CD4-positive, alpha-beta T cell (primary cell): ENCODE measurements at regions of chr13 and their contacts with region 1.

Region 1: DNA sequence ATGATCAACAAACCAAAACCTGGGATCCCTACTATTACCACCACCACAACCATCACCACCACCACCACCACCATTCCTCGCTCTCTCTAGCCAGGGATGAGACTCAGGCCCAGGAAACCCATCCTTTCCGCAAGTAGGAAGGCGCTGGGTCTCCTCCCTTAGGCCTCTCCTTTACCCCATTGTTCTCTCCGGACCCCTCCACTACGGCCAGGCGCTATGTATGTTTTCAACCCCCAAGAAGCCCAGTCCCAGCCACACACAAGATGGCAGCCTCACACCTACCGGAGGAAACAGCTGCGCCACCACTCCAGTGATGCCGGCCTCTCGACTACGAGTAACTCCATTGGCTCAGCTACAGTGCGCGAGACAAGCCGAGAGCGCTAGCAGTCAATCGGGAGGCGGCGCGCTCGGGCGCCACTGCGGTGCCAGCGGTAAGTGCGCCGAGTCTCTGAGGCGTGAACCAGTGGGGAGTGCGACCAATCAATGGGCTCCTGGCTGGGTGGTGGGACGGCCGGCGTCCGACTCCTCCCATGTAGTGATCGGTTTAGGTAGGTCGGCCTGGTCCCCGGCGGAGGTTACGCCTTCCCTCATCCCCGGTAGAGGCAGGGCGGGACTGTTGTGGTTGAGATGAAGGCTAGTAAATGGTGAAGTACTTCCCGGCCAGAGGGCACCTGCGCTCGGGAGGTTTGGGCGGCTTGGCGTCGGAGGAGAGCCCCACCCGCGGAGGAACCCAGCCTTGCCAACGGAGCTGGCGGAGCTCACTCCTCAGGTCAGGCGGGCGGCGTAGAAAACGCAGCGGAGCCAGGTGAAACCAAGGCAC is at the starts of genes CAB39L and SETDB2:
- DNase-seq: peak; percentile 97 to 100 (median 98)
- ATAC-seq: peak; percentile 88
- H3K4me3 ChIP-seq: peak within 1 kb of the TSS; percentile 76
- H3K4me3 Mint-ChIP-seq: peak within 1 kb of the TSS; percentile 97
- H3K27ac ChIP-seq: peak within 1 kb of the TSS; percentile 85
- H3K27ac Mint-ChIP-seq: peak within 1 kb of the TSS; percentile 96
- H3K4me1 ChIP-seq: peaks cover 18% of the 10 kb centered on the region
- H3K4me1 Mint-ChIP-seq: peaks cover 48% of the 10 kb centered on the region
- H3K27me3 ChIP-seq: no peaks in the 10 kb centered on the region
- H3K27me3 Mint-ChIP-seq: no peaks in the 10 kb centered on the region
- CTCF ChIP-seq: peak; percentile 41
- total RNA-seq, gene CAB39L: 1.9 to 2.5 TPM
- total RNA-seq, gene SETDB2: 10.8 to 11.5 TPM

Region 2: GRCh38 chr13:48043789-48044503 is 1400.0 kb before region 1 on chr13:
- CTCF ChIA-PET with region 1: no interaction called
- POLR2A ChIA-PET with region 1: no interaction called
- intact Hi-C with region 1: loop called in 1 of 2 experiments (anchors 5 kb)
- DNase-seq: peak in 1 of 14 experiments; percentile 6
- ATAC-seq: peak; percentile 55
- H3K4me3 ChIP-seq: no peak overlapping the region
- H3K4me3 Mint-ChIP-seq: no peak overlapping the region
- H3K27ac ChIP-seq: no peak overlapping the region
- H3K27ac Mint-ChIP-seq: peak overlapping the region; percentile 70
- H3K4me1 ChIP-seq: peaks cover 10% of the 10 kb centered on the region
- H3K4me1 Mint-ChIP-seq: peaks cover 22% of the 10 kb centered on the region
- H3K27me3 ChIP-seq: no peaks in the 10 kb centered on the region
- H3K27me3 Mint-ChIP-seq: no peaks in the 10 kb centered on the region
- CTCF ChIP-seq: no peak

Region 3: DNA sequence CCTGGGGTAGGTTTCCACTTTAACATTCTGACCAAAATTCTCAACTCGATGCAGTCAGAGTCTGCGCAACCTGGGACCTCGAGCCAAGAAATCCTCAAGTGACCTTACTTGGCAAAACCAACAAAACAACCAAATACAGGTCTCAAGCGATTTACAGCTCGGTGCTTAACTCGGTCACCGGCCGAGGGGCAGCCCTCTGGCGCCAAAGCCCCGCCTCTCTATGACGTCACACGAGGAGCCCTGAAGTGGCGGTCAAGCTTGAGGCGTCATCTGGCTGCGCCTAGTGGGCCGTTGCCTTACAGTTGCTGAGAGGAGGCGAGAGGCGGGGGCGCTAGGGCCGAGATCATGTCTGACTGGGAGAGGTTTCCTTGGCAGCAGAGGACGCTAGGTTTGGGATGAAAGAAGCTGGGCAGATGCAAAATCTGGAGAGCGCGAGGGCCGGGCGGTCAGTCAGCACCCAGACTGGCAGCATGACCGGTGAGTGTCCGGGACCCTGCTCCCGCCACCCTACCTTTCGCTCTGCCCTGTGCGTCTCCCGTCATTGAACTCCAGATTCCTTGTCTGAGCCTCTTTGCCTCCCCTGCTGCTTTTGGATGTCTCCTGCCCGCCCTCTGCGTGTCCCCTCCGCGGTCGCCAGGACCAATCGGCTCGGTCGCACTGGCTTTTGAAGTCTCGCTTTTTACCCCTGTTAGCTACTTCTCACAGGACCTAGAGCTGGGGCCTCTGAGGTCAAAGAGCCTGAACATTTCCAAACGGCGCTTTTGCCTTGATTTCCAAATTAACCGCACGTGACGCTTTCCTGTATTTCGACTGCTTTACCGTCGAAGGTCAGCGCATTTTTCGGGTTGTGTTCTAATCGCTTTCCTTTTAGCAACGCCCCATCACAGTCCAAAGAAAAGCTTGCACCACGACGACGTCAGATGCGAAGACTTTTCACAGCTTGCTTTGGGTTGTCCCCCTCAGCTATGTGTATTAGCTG is 196.0 kb before region 1 on chr13 and contains the start of gene CDADC1:
- CTCF ChIA-PET with region 1: no interaction called
- POLR2A ChIA-PET with region 1: interaction called, 15 read pairs
- intact Hi-C with region 1: no loop called
- DNase-seq: peak; percentile 61 to 93 (median 76)
- ATAC-seq: peak; percentile 65
- H3K4me3 ChIP-seq: peak within 1 kb of the TSS; percentile 65
- H3K4me3 Mint-ChIP-seq: peak within 1 kb of the TSS; percentile 93
- H3K27ac ChIP-seq: peak within 1 kb of the TSS; percentile 36 to 85
- H3K27ac Mint-ChIP-seq: peak within 1 kb of the TSS; percentile 95
- H3K4me1 ChIP-seq: peaks cover 22% of the 10 kb centered on the region
- H3K4me1 Mint-ChIP-seq: peaks cover 49% of the 10 kb centered on the region
- H3K27me3 ChIP-seq: no peaks in the 10 kb centered on the region
- H3K27me3 Mint-ChIP-seq: peaks cover 7% of the 10 kb centered on the region
- CTCF ChIP-seq: no peak
- total RNA-seq, gene CDADC1: 9.1 to 11.3 TPM

Region 4: DNA sequence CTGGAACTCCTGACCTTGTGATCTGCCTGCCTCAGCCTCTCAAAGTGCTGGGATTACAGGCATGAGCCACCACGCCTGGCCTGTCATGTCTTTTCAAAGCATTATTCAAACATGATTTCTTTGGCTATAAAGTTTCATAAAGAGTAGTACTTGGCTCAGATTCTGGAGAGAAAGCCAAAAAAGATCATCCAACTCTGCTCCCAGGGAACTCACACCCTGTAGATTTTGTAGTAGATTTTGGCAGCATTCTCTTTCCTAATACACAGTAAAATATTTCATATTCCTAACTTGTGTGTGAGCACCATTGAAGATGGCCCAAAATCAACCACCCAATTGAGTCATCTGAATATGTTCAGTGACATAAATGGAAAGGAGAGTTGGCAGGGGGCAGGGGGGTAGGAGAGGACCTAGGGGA is 48.5 kb before region 1 on chr13:
- CTCF ChIA-PET with region 1: no interaction called
- POLR2A ChIA-PET with region 1: no interaction called
- intact Hi-C with region 1: no loop called
- DNase-seq: no peak
- ATAC-seq: no peak
- H3K4me3 ChIP-seq: no peak overlapping the region
- H3K4me3 Mint-ChIP-seq: no peak overlapping the region
- H3K27ac ChIP-seq: no peak overlapping the region
- H3K27ac Mint-ChIP-seq: no peak overlapping the region
- H3K4me1 ChIP-seq: no peaks in the 10 kb centered on the region
- H3K4me1 Mint-ChIP-seq: no peaks in the 10 kb centered on the region
- H3K27me3 ChIP-seq: no peaks in the 10 kb centered on the region
- H3K27me3 Mint-ChIP-seq: no peaks in the 10 kb centered on the region
- CTCF ChIP-seq: no peak

Region 5: DNA sequence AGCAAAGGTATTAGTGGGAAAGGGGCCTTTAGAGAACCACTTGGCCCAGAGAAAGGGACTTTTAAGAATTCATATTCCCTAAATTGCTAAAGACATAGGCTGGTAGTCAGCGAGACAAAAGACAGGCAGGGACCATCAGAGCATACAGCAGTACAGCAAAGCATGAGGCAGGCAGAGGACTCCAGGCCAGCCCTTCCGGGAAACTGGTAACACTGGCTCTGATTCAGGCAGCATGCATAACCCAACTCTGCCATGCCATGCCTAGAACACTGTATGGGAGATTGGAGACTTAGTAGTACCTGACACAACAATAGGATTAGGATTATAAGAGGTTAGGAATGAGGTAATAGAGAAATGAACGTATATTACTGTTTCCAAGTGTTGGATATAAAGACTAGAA is 34.9 kb before region 1 on chr13:
- CTCF ChIA-PET with region 1: no interaction called
- POLR2A ChIA-PET with region 1: no interaction called
- intact Hi-C with region 1: no loop called
- DNase-seq: no peak
- ATAC-seq: no peak
- H3K4me3 ChIP-seq: no peak overlapping the region
- H3K4me3 Mint-ChIP-seq: no peak overlapping the region
- H3K27ac ChIP-seq: no peak overlapping the region
- H3K27ac Mint-ChIP-seq: no peak overlapping the region
- H3K4me1 ChIP-seq: no peaks in the 10 kb centered on the region
- H3K4me1 Mint-ChIP-seq: no peaks in the 10 kb centered on the region
- H3K27me3 ChIP-seq: no peaks in the 10 kb centered on the region
- H3K27me3 Mint-ChIP-seq: no peaks in the 10 kb centered on the region
- CTCF ChIP-seq: no peak

Region 6: DNA sequence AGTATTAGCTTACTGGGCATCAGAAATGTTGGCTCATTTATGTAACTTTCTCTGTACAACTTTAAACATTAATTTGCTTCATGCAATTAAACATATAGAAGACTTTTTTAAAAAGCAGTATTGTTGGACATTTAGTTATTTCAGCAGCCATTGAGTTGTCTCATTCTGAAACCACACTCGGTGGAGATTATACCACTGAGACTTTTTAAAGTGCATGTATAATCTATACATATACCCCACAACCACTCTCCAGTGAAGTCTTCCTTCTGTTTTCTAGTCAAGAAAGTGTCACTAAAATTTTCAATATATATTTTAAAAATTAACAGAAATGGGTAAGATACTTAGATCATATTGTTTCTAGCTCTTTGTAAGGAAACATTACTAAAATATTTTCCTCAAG is 15.7 kb after region 1 on chr13:
- CTCF ChIA-PET with region 1: interaction called, 4 read pairs
- POLR2A ChIA-PET with region 1: interaction called, 27 read pairs
- intact Hi-C with region 1: no loop called
- DNase-seq: no peak
- ATAC-seq: no peak
- H3K4me3 ChIP-seq: no peak overlapping the region
- H3K4me3 Mint-ChIP-seq: no peak overlapping the region
- H3K27ac ChIP-seq: no peak overlapping the region
- H3K27ac Mint-ChIP-seq: no peak overlapping the region
- H3K4me1 ChIP-seq: no peaks in the 10 kb centered on the region
- H3K4me1 Mint-ChIP-seq: peaks cover 29% of the 10 kb centered on the region
- H3K27me3 ChIP-seq: no peaks in the 10 kb centered on the region
- H3K27me3 Mint-ChIP-seq: no peaks in the 10 kb centered on the region
- CTCF ChIP-seq: no peak

Region 7: GRCh38 chr13:49585220-49586157 is 141.6 kb after region 1 on chr13 and contains the start of gene RCBTB1:
- CTCF ChIA-PET with region 1: no interaction called
- POLR2A ChIA-PET with region 1: interaction called, 34 read pairs
- intact Hi-C with region 1: loop called in 1 of 2 experiments (anchors 2 kb)
- DNase-seq: peak; percentile 44 to 89 (median 62)
- ATAC-seq: peak; percentile 94
- H3K4me3 ChIP-seq: peak within 1 kb of the TSS; percentile 90
- H3K4me3 Mint-ChIP-seq: peak within 1 kb of the TSS; percentile 96
- H3K27ac ChIP-seq: peak within 1 kb of the TSS; percentile 59 to 74
- H3K27ac Mint-ChIP-seq: peak within 1 kb of the TSS; percentile 75
- H3K4me1 ChIP-seq: peaks cover 14% of the 10 kb centered on the region
- H3K4me1 Mint-ChIP-seq: peaks cover 40% of the 10 kb centered on the region
- H3K27me3 ChIP-seq: no peaks in the 10 kb centered on the region
- H3K27me3 Mint-ChIP-seq: no peaks in the 10 kb centered on the region
- CTCF ChIP-seq: no peak
- total RNA-seq, gene RCBTB1: 10.3 to 11.4 TPM

Region 8: DNA sequence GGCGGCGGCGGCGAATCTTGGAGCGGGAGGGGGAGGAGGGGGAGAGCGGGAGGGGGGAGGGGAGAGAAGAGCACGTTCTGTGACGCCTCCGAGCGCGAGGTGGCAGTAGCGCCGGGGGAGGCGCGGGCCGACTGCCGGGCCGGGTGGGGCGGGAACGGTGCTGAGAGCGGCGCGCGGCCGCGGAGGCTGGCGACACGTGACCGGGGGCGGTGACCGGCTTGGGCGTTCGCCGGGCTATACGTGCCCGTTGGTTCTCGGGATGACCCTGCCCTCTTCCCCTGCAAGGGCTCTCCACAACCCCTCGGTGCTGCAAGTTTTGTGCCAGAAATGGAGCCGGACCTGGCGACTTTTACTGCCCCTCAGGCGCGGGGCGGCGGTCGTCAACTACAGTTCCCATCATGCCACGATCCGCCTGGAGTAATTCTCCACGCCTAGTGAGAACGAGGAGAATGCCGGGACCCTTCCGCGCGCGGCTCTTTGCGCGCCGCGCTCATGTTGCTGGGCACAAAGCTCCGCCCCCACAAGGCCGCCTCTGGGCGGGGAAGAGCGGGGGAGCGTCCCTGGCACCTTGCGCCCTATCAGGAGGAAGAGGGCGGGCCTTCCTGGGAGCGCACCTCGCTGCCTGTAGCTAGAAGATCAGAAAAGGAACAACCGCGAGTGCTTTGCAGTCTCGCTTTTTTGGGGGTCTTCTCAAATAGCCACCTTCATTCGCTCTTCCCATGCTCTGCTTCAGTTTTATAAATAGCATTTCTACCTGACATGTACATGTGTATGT is 348.8 kb after region 1 on chr13 and contains the start of gene KPNA3:
- CTCF ChIA-PET with region 1: interaction called, 3 read pairs
- POLR2A ChIA-PET with region 1: interaction called, 42 read pairs
- intact Hi-C with region 1: loop called (anchors 2 to 10 kb)
- DNase-seq: peak; percentile 90 to 98 (median 94)
- ATAC-seq: peak; percentile 89
- H3K4me3 ChIP-seq: peak within 1 kb of the TSS; percentile 84
- H3K4me3 Mint-ChIP-seq: peak within 1 kb of the TSS; percentile 100
- H3K27ac ChIP-seq: peak within 1 kb of the TSS; percentile 83 to 92
- H3K27ac Mint-ChIP-seq: peak within 1 kb of the TSS; percentile 95
- H3K4me1 ChIP-seq: peaks cover 22% of the 10 kb centered on the region
- H3K4me1 Mint-ChIP-seq: peaks cover 41% of the 10 kb centered on the region
- H3K27me3 ChIP-seq: no peaks in the 10 kb centered on the region
- H3K27me3 Mint-ChIP-seq: peaks cover 9% of the 10 kb centered on the region
- CTCF ChIP-seq: no peak
- total RNA-seq, gene KPNA3: 15.7 to 17.3 TPM